Calu3 (cell line): ENCODE measurements at regions of chr10 and their contacts with region 1.

Region 1: DNA sequence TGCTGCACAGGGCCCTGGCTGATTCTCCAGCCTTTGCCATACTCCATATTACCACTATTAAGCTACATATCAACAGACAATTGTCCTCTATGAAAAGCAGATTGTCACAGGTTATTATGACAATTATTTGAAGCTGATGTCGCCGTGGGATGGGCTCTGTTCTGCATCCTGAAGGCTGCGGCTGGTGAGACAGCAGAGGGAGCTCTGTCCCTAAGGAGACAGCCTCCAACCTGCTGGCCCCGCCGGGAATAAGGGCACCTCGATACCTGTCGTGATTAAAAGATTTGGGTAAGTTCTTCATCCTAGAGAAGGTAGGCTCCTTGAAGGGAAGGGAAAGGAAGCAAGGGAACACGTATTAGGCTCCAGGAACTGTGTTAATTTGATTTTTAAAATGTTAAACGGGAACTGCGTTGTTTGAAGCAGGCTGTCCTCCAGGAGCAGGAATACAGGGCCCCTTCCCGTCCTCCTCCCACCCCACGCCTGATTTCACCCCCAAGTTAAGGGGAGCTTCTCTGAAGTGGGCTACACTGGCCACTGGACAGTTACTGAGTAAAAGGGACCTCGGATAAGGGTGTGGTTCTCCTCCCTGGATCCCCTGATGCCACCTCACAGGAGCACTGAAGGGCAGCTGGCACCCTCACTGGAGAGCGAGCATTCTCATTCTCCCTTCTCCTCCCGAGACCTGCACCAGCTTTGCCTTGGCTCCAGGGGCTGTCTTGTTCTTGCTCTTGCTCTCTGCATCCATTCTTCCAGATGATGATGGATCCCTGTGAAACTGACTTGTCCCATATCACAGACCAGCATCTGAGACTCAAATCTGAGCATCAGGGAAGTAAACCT is 11.8 kb upstream of the TIAL1 start:
- DNase-seq: peak; percentile 57
- H3K4me3 Mint-ChIP-seq: no peak overlapping the region
- H3K27ac Mint-ChIP-seq: no peak overlapping the region
- H3K4me1 Mint-ChIP-seq: no peaks in the 10 kb centered on the region
- H3K27me3 Mint-ChIP-seq: no peaks in the 10 kb centered on the region
- CTCF ChIP-seq: peak; percentile 37

Region 2: DNA sequence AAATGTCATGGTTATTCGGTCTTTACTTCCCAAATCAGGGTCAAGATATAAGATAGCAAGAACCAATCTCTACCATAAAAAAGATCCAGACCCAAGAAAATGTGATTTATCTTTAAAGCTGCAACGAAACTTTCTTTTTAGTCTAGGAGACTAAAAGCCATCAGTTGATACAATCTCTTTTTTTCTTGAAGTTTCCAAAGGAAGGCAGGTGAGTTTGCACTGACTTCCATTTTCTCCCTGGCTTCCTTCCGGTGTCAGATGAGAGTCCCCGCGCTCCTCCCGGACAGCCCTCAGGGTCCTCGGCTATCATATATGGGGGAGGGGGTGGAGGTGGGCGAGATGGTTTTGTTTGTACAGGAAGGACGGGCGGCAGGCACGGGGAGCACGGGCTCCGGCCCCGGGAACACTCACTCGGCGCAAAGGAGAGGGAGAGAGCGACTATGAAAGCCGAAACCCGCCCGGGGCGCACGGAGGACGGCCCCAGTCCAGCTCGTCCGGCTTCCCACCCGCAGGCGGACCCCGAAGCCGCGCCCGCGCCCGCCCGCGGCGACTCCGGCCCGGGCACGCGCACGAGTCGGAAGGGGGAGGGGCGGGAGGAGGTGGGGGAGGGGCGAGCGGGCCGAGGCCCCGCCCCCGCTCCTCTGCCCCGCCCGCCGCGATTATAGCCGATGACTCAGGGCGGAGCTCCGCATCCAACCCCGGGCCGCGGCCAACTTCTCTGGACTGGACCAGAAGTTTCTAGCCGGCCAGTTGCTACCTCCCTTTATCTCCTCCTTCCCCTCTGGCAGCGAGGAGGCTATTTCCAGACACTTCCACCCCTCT is 42.4 kb after region 1 on chr10 and contains the start of gene BAG3:
- CTCF ChIA-PET with region 1: interaction called, 4 read pairs
- intact Hi-C with region 1: loop called (anchors 5 kb)
- DNase-seq: peak; percentile 75
- H3K4me3 Mint-ChIP-seq: peak within 1 kb of the TSS; percentile 76
- H3K27ac Mint-ChIP-seq: peak within 1 kb of the TSS; percentile 70
- H3K4me1 Mint-ChIP-seq: peaks cover 19% of the 10 kb centered on the region
- H3K27me3 Mint-ChIP-seq: no peaks in the 10 kb centered on the region
- CTCF ChIP-seq: no peak
- total RNA-seq, gene BAG3: 29.6 and 35.2 TPM in 2 replicates

Region 3: GRCh38 chr10:119725828-119726675 is 117.5 kb after region 1 on chr10 and contains the start of gene INPP5F:
- CTCF ChIA-PET with region 1: interaction called, 3 read pairs
- intact Hi-C with region 1: loop called (anchors 5 kb)
- DNase-seq: peak; percentile 97
- H3K4me3 Mint-ChIP-seq: peak within 1 kb of the TSS; percentile 72
- H3K27ac Mint-ChIP-seq: peak within 1 kb of the TSS; percentile 61
- H3K4me1 Mint-ChIP-seq: peaks cover 26% of the 10 kb centered on the region
- H3K27me3 Mint-ChIP-seq: no peaks in the 10 kb centered on the region
- CTCF ChIP-seq: no peak
- total RNA-seq, gene INPP5F: 6.9 and 7.3 TPM in 2 replicates

Region 4: DNA sequence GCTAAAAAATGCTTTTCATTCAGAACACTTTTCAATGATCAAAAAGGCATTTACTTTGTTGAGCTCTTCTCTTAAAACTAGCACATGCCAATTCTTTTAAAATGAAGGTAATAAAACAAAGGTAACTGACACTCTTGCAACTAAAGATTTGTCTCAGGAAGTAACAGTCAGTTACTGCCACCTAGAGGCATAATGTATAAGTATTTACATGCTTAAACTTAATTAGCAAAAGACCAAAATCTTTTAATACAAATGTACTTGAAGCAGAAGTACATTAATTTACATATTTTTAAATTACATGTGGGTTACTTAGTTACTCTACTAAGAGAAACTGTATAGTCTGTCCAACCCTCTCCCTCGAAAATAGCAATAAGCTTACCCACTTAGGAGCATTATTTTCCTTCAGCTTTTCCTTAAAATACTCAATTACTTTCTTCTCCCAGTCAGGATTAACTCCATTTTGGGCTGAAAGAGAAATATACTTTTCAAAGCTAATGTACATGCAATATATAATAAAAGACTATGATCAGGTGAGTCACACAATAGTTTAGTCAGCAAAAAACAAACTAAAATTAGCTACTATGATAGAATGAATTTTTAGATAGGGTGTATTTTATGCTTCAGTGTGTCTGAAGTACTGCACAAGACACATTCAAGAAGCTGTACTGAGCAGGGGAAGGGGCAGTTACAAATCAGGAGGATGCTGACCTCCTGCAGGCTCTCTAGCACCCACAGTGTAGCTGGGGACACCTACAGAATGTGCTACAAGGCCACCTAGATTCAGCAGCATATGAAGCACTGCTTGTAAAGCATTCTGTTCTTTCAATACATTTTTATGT is 251.1 kb after region 1 on chr10:
- CTCF ChIA-PET with region 1: no interaction called
- intact Hi-C with region 1: loop called (anchors 2 kb)
- DNase-seq: no peak
- H3K4me3 Mint-ChIP-seq: no peak overlapping the region
- H3K27ac Mint-ChIP-seq: no peak overlapping the region
- H3K4me1 Mint-ChIP-seq: peaks cover 7% of the 10 kb centered on the region
- H3K27me3 Mint-ChIP-seq: no peaks in the 10 kb centered on the region
- CTCF ChIP-seq: peak; percentile 17